ENCODE measurements at regions of chr12 and their contacts with region 1.

Region 1: GRCh38 chr12:113766879-113767878 is 198.9 kb downstream of the RBM19 start:
- DNase-seq: peak; percentile 49
- ATAC-seq: peak; percentile 37
- H3K4me3 ChIP-seq: peak overlapping the region in 1 of 3 experiments; percentile 40; a peak in 1 of 6 replicates
- H3K27ac ChIP-seq: peak overlapping the region; percentile 76
- H3K4me1 ChIP-seq: peaks cover 96% of the 10 kb centered on the region
- H3K27me3 ChIP-seq: no peaks in the 10 kb centered on the region
- CTCF ChIP-seq: no peak
- EP300 ChIP-seq: no peak
- POLR2A ChIP-seq: no peak
- RAD21 ChIP-seq: no peak

Region 2: GRCh38 chr12:113619202-113619601 is 148.0 kb before region 1 on chr12:
- CTCF ChIA-PET with region 1: no interaction called
- POLR2A ChIA-PET with region 1: no interaction called
- in situ Hi-C with region 1: no loop called
- intact Hi-C with region 1: no loop called
- DNase-seq: no peak
- ATAC-seq: no peak
- H3K4me3 ChIP-seq: no peak overlapping the region
- H3K27ac ChIP-seq: no peak overlapping the region
- H3K4me1 ChIP-seq: no peaks in the 10 kb centered on the region
- H3K27me3 ChIP-seq: peaks cover 1 to 11% of the 10 kb centered on the region in 2 experiments; a peak in 1 of 5 replicates
- CTCF ChIP-seq: no peak
- EP300 ChIP-seq: no peak
- POLR2A ChIP-seq: no peak
- RAD21 ChIP-seq: no peak

Region 3: GRCh38 chr12:113781415-113782198 is 14.4 kb after region 1 on chr12:
- CTCF ChIA-PET with region 1: no interaction called
- POLR2A ChIA-PET with region 1: interaction called, 14 read pairs
- in situ Hi-C with region 1: no loop called
- intact Hi-C with region 1: no loop called
- DNase-seq: peak; percentile 30
- ATAC-seq: peak; percentile 62
- H3K4me3 ChIP-seq: peak overlapping the region; percentile 25 to 58 (median 55)
- H3K27ac ChIP-seq: peak overlapping the region; percentile 8
- H3K4me1 ChIP-seq: peaks cover 58% of the 10 kb centered on the region
- H3K27me3 ChIP-seq: no peaks in the 10 kb centered on the region
- CTCF ChIP-seq: no peak
- EP300 ChIP-seq: no peak
- POLR2A ChIP-seq: no peak
- RAD21 ChIP-seq: no peak

Region 4: GRCh38 chr12:113808095-113808951 is 41.1 kb after region 1 on chr12:
- CTCF ChIA-PET with region 1: no interaction called
- POLR2A ChIA-PET with region 1: interaction called, 8 read pairs
- in situ Hi-C with region 1: no loop called
- intact Hi-C with region 1: loop called (anchors 2 kb)
- DNase-seq: peak; percentile 91
- ATAC-seq: peak; percentile 87
- H3K4me3 ChIP-seq: peak overlapping the region; percentile 11 to 53 (median 31); a peak in 5 of 6 replicates
- H3K27ac ChIP-seq: peak overlapping the region; percentile 90
- H3K4me1 ChIP-seq: peaks cover 44% of the 10 kb centered on the region
- H3K27me3 ChIP-seq: no peaks in the 10 kb centered on the region
- CTCF ChIP-seq: no peak
- EP300 ChIP-seq: peak in 1 of 2 experiments; percentile 50; a peak in 1 of 4 replicates
- POLR2A ChIP-seq: peak in 1 of 2 experiments; percentile 46; a peak in 1 of 4 replicates
- RAD21 ChIP-seq: no peak; the same call in 1 of the 2 replicates

Measured in HepG2 (cell line).